ENCODE measurements at regions of chr6 and their contacts with region 1.

Region 1: GRCh38 chr6:118770112-118770788 is 118.9 kb upstream of the CEP85L start:
- DNase-seq: no peak
- ATAC-seq: no peak
- H3K4me3 ChIP-seq: no peak overlapping the region
- H3K27ac ChIP-seq: peak overlapping the region in 1 of 12 donors; percentile 93
- H3K4me1 ChIP-seq: peaks cover 0 to 31% (median 0%) of the 10 kb centered on the region in 12 donors
- H3K27me3 ChIP-seq: no peaks in the 10 kb centered on the region
- CTCF ChIP-seq: no peak
- POLR2A ChIP-seq: no peak

Region 2: GRCh38 chr6:118659513-118660217 is 110.6 kb before region 1 on chr6:
- intact Hi-C with region 1: loop called in 6 of 10 experiments (anchors 5 to 10 kb)
- DNase-seq: no peak
- ATAC-seq: peak in 1 of 4 donors; percentile 27
- H3K4me3 ChIP-seq: no peak overlapping the region
- H3K27ac ChIP-seq: no peak overlapping the region
- H3K4me1 ChIP-seq: peaks cover 0 to 8% (median 0%) of the 10 kb centered on the region in 12 donors
- H3K27me3 ChIP-seq: no peaks in the 10 kb centered on the region
- CTCF ChIP-seq: no peak
- POLR2A ChIP-seq: no peak

Region 3: GRCh38 chr6:118736440-118736839 is 33.8 kb before region 1 on chr6:
- intact Hi-C with region 1: loop called in 1 of 10 experiments (anchors 2 kb)
- DNase-seq: no peak
- ATAC-seq: no peak
- H3K4me3 ChIP-seq: no peak overlapping the region
- H3K27ac ChIP-seq: no peak overlapping the region
- H3K4me1 ChIP-seq: peaks cover 0 to 11% (median 2%) of the 10 kb centered on the region in 12 donors
- H3K27me3 ChIP-seq: no peaks in the 10 kb centered on the region
- CTCF ChIP-seq: no peak
- POLR2A ChIP-seq: no peak